Activated CD4-positive, alpha-beta T cell treated with anti-CD3 and anti-CD28 coated beads, Interleukin-2, amount 10 ng/mL, durations not matched to agents 7 days and 5 days (primary cell): ENCODE measurements at regions of chr11 and their contacts with region 1.

Region 1: GRCh38 chr11:86193297-86194095 is 51.1 kb upstream of the EED start:
- DNase-seq: peak; percentile 80
- H3K4me3 Mint-ChIP-seq: peak overlapping the region; percentile 70
- H3K27ac Mint-ChIP-seq: peak overlapping the region; percentile 63
- H3K4me1 Mint-ChIP-seq: peaks cover 18% of the 10 kb centered on the region
- H3K27me3 Mint-ChIP-seq: peaks cover 9% of the 10 kb centered on the region

Region 2: GRCh38 chr11:86041975-86042378 is 151.5 kb before region 1 on chr11:
- CTCF ChIA-PET with region 1: interaction called, 20 read pairs
- POLR2A ChIA-PET with region 1: no interaction called
- DNase-seq: peak; percentile 69
- H3K4me3 Mint-ChIP-seq: no peak overlapping the region
- H3K27ac Mint-ChIP-seq: peak overlapping the region; percentile 14
- H3K4me1 Mint-ChIP-seq: peaks cover 55% of the 10 kb centered on the region
- H3K27me3 Mint-ChIP-seq: no peaks in the 10 kb centered on the region

Region 3: GRCh38 chr11:86068951-86069407 is 124.5 kb before region 1 on chr11 and contains the start of gene PICALM:
- CTCF ChIA-PET with region 1: interaction called, 13 read pairs
- POLR2A ChIA-PET with region 1: interaction called, 4 read pairs
- DNase-seq: peak; percentile 98
- H3K4me3 Mint-ChIP-seq: peak within 1 kb of the TSS; percentile 98
- H3K27ac Mint-ChIP-seq: peak within 1 kb of the TSS; percentile 96
- H3K4me1 Mint-ChIP-seq: peaks cover 30% of the 10 kb centered on the region
- H3K27me3 Mint-ChIP-seq: no peaks in the 10 kb centered on the region
- total RNA-seq, gene PICALM: 89.4 to 140 TPM

Region 4: DNA sequence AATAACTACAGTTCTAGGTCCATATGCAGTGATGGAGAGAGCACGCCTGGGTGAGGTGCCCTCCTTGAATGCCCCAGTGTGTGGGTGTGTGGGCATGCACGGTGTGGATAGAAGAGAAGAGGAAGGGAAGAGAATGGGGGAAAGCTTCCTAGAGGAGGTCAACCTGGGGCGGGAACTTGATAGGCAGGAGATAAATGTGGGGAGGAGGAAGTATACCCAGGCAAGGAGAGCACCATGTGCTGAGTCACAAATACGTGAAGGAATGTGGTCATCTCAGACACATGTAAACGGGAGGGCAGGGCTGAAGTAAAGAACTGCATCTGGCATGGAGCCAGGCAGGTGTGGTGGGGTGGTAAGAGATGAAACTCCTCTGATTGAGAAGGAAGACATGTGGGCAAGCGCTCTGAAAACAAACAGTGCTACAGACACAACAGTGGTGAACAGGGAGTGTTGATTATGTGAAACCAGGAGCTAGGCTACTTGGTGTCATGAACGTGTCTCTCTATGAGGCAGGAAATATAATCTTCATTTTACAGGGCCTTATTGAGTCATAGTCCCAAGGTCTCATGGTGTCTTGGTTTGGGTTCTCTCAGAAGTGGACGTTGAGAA is 10.4 kb before region 1 on chr11:
- CTCF ChIA-PET with region 1: interaction called, 23 read pairs
- POLR2A ChIA-PET with region 1: no interaction called
- DNase-seq: peak; percentile 50
- H3K4me3 Mint-ChIP-seq: no peak overlapping the region
- H3K27ac Mint-ChIP-seq: no peak overlapping the region
- H3K4me1 Mint-ChIP-seq: peaks cover 6% of the 10 kb centered on the region
- H3K27me3 Mint-ChIP-seq: no peaks in the 10 kb centered on the region

Region 5: GRCh38 chr11:86205421-86206336 is 12.2 kb after region 1 on chr11:
- CTCF ChIA-PET with region 1: interaction called, 10 read pairs
- POLR2A ChIA-PET with region 1: no interaction called
- DNase-seq: no peak
- H3K4me3 Mint-ChIP-seq: no peak overlapping the region
- H3K27ac Mint-ChIP-seq: no peak overlapping the region
- H3K4me1 Mint-ChIP-seq: peaks cover 2% of the 10 kb centered on the region
- H3K27me3 Mint-ChIP-seq: no peaks in the 10 kb centered on the region

Region 6: DNA sequence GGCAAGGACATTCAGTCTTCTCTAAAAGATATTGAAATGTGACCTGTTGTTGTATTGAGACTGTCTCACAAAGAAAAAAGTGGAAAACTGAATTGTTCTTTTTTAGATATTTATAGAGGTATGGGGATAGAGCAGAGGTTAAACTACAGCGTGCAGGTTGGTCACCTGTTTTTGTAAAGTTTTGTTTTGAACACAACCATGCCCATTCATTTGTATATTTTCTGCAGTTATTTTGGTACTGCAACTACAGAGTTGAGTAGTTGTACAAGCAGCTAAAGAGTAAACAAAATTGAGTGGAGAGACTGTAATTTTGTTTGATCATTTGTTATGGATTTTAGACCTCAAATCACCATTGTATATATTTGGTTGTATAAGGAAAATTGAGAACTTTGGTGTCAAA is 62.4 kb after region 1 on chr11:
- CTCF ChIA-PET with region 1: no interaction called
- POLR2A ChIA-PET with region 1: no interaction called
- DNase-seq: no peak
- H3K4me3 Mint-ChIP-seq: no peak overlapping the region
- H3K27ac Mint-ChIP-seq: no peak overlapping the region
- H3K4me1 Mint-ChIP-seq: peaks cover 28% of the 10 kb centered on the region
- H3K27me3 Mint-ChIP-seq: no peaks in the 10 kb centered on the region

Region 7: GRCh38 chr11:86477495-86478155 is 284.1 kb after region 1 on chr11:
- CTCF ChIA-PET with region 1: no interaction called
- POLR2A ChIA-PET with region 1: no interaction called
- DNase-seq: no peak
- H3K4me3 Mint-ChIP-seq: no peak overlapping the region
- H3K27ac Mint-ChIP-seq: no peak overlapping the region
- H3K4me1 Mint-ChIP-seq: no peaks in the 10 kb centered on the region
- H3K27me3 Mint-ChIP-seq: no peaks in the 10 kb centered on the region